H1 (cell line): ENCODE measurements at regions of chr3 and their contacts with region 1.

Region 1: DNA sequence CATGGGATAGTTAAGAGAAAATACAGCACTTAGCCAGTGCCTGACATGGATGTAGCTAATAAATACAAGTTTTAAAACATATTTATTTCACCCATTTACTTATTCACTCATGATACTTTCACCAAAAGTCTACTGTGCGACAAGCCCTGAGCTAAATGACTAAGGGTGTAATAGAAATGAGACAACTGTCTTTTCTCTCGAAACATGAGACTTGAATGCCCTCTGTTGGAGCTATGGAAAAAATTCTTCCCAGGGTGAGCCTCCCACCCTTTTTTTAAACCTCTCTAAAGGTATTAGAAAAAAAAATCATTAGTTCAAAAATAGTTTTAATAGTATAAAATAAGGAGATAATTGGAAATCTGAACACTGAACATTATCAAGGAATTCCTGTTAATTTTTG is 24.3 kb upstream of the RPL14 start:
- DNase-seq: no peak
- H3K4me3 ChIP-seq: no peak overlapping the region
- H3K27ac ChIP-seq: no peak overlapping the region
- H3K4me1 ChIP-seq: peaks cover 0 to 7% (median 2%) of the 10 kb centered on the region in 4 experiments; a peak in 3 of 7 replicates
- H3K27me3 ChIP-seq: no peaks in the 10 kb centered on the region
- CTCF ChIP-seq: no peak; a peak in 1 of 4 replicates
- EP300 ChIP-seq: no peak
- POLR2A ChIP-seq: no peak
- RAD21 ChIP-seq: peak; percentile 48 to 51

Region 2: GRCh38 chr3:40329071-40329470 is 103.7 kb before region 1 on chr3:
- CTCF ChIA-PET with region 1: interaction called, 24 read pairs
- POLR2A ChIA-PET with region 1: no interaction called
- DNase-seq: no peak
- H3K4me3 ChIP-seq: no peak overlapping the region
- H3K27ac ChIP-seq: no peak overlapping the region
- H3K4me1 ChIP-seq: peaks cover 0 to 16% (median 5%) of the 10 kb centered on the region in 4 experiments; a peak in 6 of 7 replicates
- H3K27me3 ChIP-seq: no peaks in the 10 kb centered on the region
- CTCF ChIP-seq: no peak
- EP300 ChIP-seq: no peak
- POLR2A ChIP-seq: no peak
- RAD21 ChIP-seq: no peak

Region 3: DNA sequence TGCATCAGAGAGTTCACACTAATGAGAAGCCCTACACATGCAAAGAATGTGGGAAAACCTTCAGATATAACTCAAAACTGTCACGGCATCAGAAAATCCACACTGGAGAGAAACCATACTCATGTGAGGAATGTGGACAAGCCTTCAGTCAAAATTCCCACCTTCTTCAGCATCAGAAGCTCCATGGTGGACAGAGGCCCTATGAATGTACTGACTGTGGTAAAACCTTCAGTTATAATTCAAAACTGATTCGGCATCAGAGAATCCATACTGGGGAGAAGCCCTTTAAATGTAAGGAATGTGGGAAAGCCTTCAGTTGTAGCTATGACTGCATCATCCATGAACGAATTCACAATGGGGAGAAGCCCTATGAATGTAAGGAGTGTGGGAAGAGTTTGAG is 54.4 kb after region 1 on chr3:
- CTCF ChIA-PET with region 1: no interaction called
- POLR2A ChIA-PET with region 1: no interaction called
- DNase-seq: no peak
- H3K4me3 ChIP-seq: no peak overlapping the region
- H3K27ac ChIP-seq: no peak overlapping the region
- H3K4me1 ChIP-seq: no peaks in the 10 kb centered on the region
- H3K27me3 ChIP-seq: no peaks in the 10 kb centered on the region
- CTCF ChIP-seq: no peak
- EP300 ChIP-seq: no peak
- POLR2A ChIP-seq: no peak
- RAD21 ChIP-seq: no peak